Endothelial cell of umbilical vein (primary cell): ENCODE measurements at regions of chr1 and their contacts with region 1.

Region 1: DNA sequence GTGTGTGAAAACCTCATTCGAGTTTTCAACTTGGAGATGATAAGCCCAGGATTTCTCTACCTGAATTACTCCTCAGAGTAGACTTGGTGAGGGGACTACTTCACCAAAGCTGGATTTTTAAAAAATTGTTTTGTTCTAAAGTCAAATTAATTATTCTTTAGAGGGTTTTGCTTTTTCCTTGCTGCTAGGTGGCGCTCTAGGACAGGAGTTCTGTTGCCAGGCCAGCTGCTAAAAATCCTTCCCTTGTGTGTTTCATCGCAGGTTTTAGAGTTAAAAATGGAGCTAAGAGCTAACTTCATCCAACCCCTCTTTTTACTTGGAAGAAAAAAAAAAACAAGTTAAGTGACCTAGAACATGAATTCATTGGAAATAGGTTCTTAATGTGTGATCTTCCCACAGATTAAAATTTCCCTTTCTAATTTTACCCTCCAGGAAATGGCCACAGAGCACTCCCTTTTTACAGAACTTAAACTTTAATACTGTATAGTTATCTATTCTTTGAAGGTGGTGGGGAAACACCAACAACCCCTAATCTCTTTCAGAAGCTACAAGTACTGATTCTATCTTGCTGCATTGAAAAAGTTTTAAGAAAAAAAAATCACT is 36.7 kb upstream of the FAM163A start:
- DNase-seq: peak; percentile 68
- H3K4me3 ChIP-seq: no peak overlapping the region
- H3K27ac ChIP-seq: no peak overlapping the region
- H3K4me1 ChIP-seq: peaks cover 29% of the 10 kb centered on the region
- H3K27me3 ChIP-seq: peaks cover 7 to 14% of the 10 kb centered on the region in 2 experiments
- CTCF ChIP-seq: peak; percentile 62 to 68
- POLR2A ChIP-seq: no peak

Region 2: GRCh38 chr1:179081687-179082332 is 624.6 kb before region 1 on chr1 and contains the start of gene TOR3A:
- CTCF ChIA-PET with region 1: interaction called, 4 read pairs
- POLR2A ChIA-PET with region 1: no interaction called
- dilution Hi-C with region 1: no loop called
- intact Hi-C with region 1: loop called (anchors 10 kb)
- DNase-seq: peak; percentile 89
- H3K4me3 ChIP-seq: peak within 1 kb of the TSS; percentile 68 to 80 (median 77)
- H3K27ac ChIP-seq: peak within 1 kb of the TSS; percentile 62
- H3K4me1 ChIP-seq: peaks cover 14% of the 10 kb centered on the region
- H3K27me3 ChIP-seq: no peaks in the 10 kb centered on the region
- CTCF ChIP-seq: no peak
- POLR2A ChIP-seq: peak; percentile 88
- total RNA-seq, gene TOR3A: 16.7 and 22.4 TPM in 2 replicates

Region 3: DNA sequence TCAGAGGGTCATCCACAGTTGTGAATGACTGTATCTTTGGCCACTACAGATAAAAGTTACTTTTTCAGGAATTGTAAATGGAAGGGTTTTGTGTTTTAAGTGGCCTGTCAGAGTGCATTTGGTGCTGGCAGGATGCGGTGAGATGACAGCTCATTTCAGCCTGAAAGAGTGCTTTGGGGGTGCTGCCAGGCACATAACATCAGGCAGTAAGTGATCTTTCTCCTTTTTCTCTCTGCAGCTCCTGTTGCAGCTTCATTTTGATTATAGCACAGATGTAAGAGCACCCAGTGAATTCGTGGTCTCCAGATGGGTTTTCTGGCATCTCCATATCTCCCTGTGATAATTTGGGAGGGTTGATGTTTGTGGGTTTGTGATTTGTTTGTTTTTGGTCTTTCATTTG is 21.8 kb after region 1 on chr1:
- CTCF ChIA-PET with region 1: interaction called, 13 read pairs
- POLR2A ChIA-PET with region 1: no interaction called
- dilution Hi-C with region 1: no loop called
- intact Hi-C with region 1: no loop called
- DNase-seq: no peak
- H3K4me3 ChIP-seq: no peak overlapping the region
- H3K27ac ChIP-seq: no peak overlapping the region
- H3K4me1 ChIP-seq: no peaks in the 10 kb centered on the region
- H3K27me3 ChIP-seq: peaks cover 23 to 29% of the 10 kb centered on the region in 2 experiments
- CTCF ChIP-seq: no peak
- POLR2A ChIP-seq: no peak

Region 4: GRCh38 chr1:179770884-179771502 is 64.6 kb after region 1 on chr1:
- CTCF ChIA-PET with region 1: interaction called, 26 read pairs
- POLR2A ChIA-PET with region 1: no interaction called
- dilution Hi-C with region 1: no loop called
- intact Hi-C with region 1: no loop called
- DNase-seq: no peak
- H3K4me3 ChIP-seq: no peak overlapping the region
- H3K27ac ChIP-seq: no peak overlapping the region
- H3K4me1 ChIP-seq: no peaks in the 10 kb centered on the region
- H3K27me3 ChIP-seq: peaks cover 0 to 3% of the 10 kb centered on the region in 2 experiments
- CTCF ChIP-seq: no peak
- POLR2A ChIP-seq: no peak

Region 5: DNA sequence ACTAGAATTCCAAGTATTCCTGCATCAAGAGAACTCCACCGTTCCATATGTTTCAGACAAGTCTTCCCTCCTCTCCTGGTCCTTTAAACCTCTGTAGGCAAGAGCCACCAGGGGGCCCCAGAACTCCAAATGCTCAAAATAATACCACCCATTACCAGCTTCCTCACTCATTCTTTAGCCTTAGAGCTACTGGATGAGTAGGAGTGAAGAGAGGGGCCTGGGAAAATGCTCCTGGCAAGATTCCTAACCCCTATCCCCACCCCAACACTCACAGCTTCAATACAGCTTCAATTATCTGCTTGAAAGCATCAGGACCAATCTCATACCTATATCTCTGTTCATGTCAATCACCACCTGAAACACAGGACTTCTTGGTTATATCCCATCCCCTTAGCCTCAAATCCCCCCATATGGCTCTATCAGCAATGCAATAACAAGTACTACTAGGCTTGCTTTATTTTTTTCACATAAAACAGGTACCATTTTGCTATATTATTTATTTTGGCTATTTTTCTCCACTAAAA is 161.4 kb after region 1 on chr1:
- CTCF ChIA-PET with region 1: interaction called, 12 read pairs
- POLR2A ChIA-PET with region 1: no interaction called
- dilution Hi-C with region 1: no loop called
- intact Hi-C with region 1: loop called (anchors 2 kb)
- DNase-seq: peak; percentile 68
- H3K4me3 ChIP-seq: no peak overlapping the region
- H3K27ac ChIP-seq: no peak overlapping the region
- H3K4me1 ChIP-seq: no peaks in the 10 kb centered on the region
- H3K27me3 ChIP-seq: no peaks in the 10 kb centered on the region
- CTCF ChIP-seq: peak; percentile 79 to 80
- POLR2A ChIP-seq: no peak

Region 6: DNA sequence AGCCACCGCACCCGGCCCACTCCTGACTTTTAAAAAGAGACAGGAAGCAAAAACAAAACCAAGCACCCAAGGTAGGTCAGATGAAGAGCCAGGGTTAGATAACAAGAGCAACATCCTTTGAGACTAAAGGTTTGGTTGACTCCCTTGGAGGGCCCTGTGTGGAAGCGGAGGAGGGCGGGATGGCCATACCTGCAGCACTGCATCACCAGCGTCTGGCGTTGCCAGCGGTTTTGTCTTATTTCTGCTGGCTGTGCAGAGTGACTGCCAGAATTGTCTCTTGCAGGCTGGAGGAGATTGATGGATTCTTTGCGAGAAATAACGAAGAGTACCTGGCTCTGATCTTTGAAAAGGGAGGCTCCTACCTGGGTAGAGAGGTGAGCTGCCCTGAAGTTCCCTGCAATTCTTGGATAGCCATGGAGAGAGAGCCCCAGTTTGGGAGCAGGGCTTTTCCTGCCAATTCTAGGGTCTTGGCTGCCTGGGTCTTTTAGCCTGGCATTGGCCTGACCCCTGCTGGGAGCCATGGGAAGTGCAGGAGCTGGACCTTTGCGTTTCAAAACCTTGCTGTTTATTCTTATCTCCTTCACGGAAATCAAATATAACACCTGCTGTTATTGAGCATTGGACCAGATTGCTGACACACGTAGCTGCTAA is 472.2 kb after region 1 on chr1:
- CTCF ChIA-PET with region 1: interaction called, 27 read pairs
- POLR2A ChIA-PET with region 1: no interaction called
- dilution Hi-C with region 1: no loop called
- intact Hi-C with region 1: loop called (anchors 1 kb)
- DNase-seq: peak; percentile 64
- H3K4me3 ChIP-seq: no peak overlapping the region
- H3K27ac ChIP-seq: no peak overlapping the region
- H3K4me1 ChIP-seq: no peaks in the 10 kb centered on the region
- H3K27me3 ChIP-seq: no peaks in the 10 kb centered on the region
- CTCF ChIP-seq: peak; percentile 91 to 93
- POLR2A ChIP-seq: no peak